ENCODE measurements at regions of chr15 and their contacts with region 1.

Region 1: GRCh38 chr15:42650208-42651066 is 75.0 kb downstream of the STARD9 start:
- DNase-seq: no peak

Region 2: GRCh38 chr15:42575188-42576039 is 75.0 kb before region 1 on chr15 and contains the start of gene STARD9:
- intact Hi-C with region 1: loop called (anchors 5 kb)
- DNase-seq: peak; percentile 99
- total RNA-seq, gene STARD9: 9.2 TPM

Region 3: DNA sequence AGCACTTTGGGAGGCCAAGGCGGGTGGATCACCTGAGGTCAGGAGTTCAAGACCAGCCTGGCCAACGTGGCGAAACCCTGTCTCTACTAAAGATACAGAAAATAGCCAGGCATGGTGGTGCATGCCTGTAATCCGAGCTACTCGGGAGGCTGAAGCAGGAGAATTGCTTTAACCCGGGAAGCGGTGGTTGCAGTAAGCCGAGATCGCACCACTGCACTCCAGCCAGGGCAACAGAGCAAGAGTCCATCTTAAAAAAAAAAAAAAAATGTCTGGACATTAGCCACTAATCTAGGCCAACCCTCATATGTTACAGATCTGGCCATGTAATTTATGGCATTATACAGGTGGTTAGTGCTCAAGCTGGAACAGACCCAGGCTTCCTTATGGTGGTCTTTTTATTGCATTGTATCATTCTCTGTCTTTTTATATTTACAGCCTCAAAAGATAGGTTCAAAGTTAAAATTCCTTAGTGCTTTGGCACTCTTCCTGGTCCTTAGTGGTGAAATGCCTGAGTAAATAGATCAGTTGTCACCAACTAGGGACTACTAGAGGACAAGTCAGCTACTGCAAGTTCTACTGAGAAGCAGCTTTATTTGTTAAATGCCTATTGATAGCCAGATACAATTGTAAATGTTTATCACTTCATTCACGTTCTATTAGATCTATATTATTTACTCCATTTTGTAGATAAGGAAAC is 59.1 kb before region 1 on chr15:
- intact Hi-C with region 1: loop called (anchors 5 kb)
- DNase-seq: no peak

Region 4: DNA sequence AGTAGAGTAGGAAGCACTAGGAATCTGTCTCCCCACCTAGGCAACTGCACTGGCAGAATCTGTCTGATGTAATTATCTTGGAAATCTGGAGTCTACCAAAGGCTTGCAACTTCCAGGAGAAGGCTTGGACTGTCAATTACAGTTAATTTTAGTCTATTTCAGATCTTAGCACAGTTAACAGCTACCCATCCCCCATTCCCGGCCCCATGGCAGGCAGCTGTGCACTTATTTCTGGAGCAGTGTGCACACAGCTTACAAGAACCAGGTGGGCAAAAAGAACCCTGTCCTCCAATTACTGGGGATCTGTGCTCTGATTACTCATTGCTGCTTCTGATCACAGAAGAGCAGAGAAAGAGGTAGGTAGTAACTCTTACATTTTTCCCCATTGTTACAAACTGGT is 98.8 kb after region 1 on chr15:
- intact Hi-C with region 1: no loop called
- DNase-seq: no peak

Region 5: DNA sequence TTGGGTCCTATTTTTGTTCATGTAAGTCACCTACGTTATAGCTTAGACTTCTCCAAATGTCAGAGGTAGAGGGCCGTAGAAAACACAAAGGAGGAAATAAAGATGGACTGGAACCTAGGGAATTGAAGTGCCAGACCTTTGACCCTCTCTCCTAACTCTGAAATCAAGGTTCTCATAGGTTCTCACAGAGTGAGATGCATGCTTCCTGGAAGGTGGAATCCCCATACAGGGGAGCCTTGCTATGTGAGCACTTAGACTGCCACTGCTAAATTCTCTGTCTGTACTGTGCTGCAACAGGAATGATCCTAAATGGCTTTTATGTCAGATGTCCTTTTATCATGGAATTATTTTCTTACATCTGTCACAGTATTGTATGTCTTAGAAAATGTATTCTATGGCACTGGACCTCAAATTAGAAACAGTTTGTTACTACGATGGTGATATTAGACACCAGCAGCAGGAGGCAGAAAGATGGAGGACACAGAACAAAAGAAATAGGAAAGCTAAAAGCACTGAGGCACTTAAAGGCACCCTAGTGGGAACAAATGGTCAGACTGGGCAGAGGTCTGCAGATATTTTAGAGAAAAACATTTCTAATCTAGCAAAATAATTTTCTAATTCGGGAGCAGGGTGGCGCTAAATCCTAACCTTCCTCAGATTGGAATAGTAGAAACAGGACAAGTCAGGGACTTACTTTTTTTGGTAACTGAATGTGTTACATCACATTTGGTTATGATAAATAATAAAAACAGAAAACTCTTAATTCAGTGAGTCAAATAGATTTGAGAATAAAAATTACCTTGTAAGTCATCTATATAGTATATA is 146.7 kb after region 1 on chr15:
- intact Hi-C with region 1: no loop called
- DNase-seq: no peak

Region 6: DNA sequence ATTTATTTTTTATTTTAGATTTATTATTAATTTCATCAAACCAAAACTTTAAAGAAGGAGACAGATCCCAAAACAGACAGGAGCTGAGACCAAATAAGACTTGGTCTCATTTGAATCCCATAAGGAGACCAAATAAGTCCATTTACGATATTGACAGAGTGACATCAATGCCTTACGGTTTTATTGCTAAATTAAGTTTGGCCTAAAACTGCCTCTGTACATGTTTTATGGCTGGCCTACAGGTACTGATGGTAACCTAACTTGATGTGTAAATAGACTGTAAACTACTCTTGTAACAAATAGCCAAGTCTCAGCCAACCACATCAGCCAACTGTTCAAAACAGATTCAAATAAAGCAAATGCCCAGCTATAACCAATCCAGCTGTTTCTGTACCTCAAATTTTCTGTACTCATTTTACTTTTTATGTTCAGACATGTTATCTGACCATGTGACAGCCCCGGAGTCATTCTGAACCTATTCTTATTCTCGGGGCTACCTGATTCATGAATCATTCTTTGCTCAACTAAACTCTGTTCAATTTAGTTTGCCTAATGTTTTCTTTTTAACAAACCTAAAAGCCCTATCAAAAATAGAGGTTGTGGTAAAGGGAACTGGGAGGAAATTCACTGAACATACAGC is 175.9 kb after region 1 on chr15:
- intact Hi-C with region 1: no loop called
- DNase-seq: no peak